Right cardiac atrium (tissue), 5 donors: ENCODE measurements at regions of chr11 and their contacts with region 1.

Region 1: GRCh38 chr11:1572197-1573076 is at the start of gene DUSP8:
- DNase-seq: peak; percentile 94 to 98 (median 98)
- ATAC-seq: peak; percentile 79 to 85
- H3K4me3 ChIP-seq: peak within 1 kb of the TSS; percentile 93
- H3K27ac ChIP-seq: peak within 1 kb of the TSS; percentile 30
- H3K4me1 ChIP-seq: no peaks in the 10 kb centered on the region
- H3K27me3 ChIP-seq: no peaks in the 10 kb centered on the region
- total RNA-seq, gene DUSP8: 10.1 to 15.6 (median 12.3) TPM

Region 2: GRCh38 chr11:1121813-1122663 is 450.4 kb before region 1 on chr11:
- intact Hi-C with region 1: no loop called
- DNase-seq: peak in 2 of 3 donors; percentile 33 to 38
- ATAC-seq: peak in 1 of 2 donors; percentile 30
- H3K4me3 ChIP-seq: no peak overlapping the region
- H3K27ac ChIP-seq: no peak overlapping the region
- H3K4me1 ChIP-seq: no peaks in the 10 kb centered on the region
- H3K27me3 ChIP-seq: no peaks in the 10 kb centered on the region

Region 3: GRCh38 chr11:1541474-1542204 is 30.8 kb before region 1 on chr11:
- intact Hi-C with region 1: loop called in 1 of 4 experiments (anchors 5 kb)
- DNase-seq: peak in 2 of 3 donors; percentile 25 to 26
- ATAC-seq: no peak
- H3K4me3 ChIP-seq: no peak overlapping the region
- H3K27ac ChIP-seq: no peak overlapping the region
- H3K4me1 ChIP-seq: no peaks in the 10 kb centered on the region
- H3K27me3 ChIP-seq: no peaks in the 10 kb centered on the region